ENCODE measurements at regions of chr17 and their contacts with region 1.

Region 1: DNA sequence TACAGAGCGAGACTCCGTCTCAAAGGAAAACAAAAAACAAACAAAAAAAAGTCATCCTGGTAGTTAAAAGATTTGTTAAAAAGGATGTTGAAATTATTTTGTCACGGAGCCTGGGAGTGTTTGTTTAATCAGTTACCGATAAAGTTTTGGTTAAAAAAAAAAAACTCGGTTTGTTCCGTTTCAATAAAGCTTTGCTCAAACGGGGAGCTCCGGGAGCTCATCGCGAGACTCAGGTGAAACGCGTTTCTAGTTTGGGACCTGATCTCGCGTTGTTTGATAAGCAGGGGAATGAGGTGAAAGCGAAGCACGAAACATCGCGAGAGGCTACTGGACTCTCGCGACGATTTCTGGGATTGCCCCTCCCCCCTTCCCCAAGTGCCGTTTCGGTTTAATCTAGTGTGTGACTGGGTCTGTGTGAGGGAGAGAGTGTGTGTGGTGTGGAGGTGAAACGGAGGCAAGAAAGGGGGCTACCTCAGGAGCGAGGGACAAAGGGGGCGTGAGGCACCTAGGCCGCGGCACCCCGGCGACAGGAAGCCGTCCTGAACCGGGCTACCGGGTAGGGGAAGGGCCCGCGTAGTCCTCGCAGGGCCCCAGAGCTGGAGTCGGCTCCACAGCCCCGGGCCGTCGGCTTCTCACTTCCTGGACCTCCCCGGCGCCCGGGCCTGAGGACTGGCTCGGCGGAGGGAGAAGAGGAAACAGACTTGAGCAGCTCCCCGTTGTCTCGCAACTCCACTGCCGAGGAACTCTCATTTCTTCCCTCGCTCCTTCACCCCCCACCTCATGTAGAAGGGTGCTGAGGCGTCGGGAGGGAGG is at the start of gene CDK12:
- DNase-seq: peak; percentile 93
- ATAC-seq: peak; percentile 92
- H3K4me3 Mint-ChIP-seq: peak within 1 kb of the TSS; percentile 93
- H3K27ac Mint-ChIP-seq: peak within 1 kb of the TSS; percentile 99
- H3K4me1 Mint-ChIP-seq: peaks cover 26% of the 10 kb centered on the region
- H3K27me3 Mint-ChIP-seq: no peaks in the 10 kb centered on the region; the same call in 1 of the 2 replicates
- CTCF ChIP-seq: no peak
- total RNA-seq, gene CDK12: 58.4 to 61.6 TPM (median 59.5 TPM) in 3 replicates

Region 2: GRCh38 chr17:39450847-39451581 is 10.3 kb before region 1 on chr17 and contains the start of gene MED1:
- CTCF ChIA-PET with region 1: interaction called, 16 read pairs
- POLR2A ChIA-PET with region 1: interaction called, 23 read pairs
- DNase-seq: peak; percentile 94
- ATAC-seq: peak; percentile 98
- H3K4me3 Mint-ChIP-seq: peak within 1 kb of the TSS; percentile 99
- H3K27ac Mint-ChIP-seq: peak within 1 kb of the TSS; percentile 98
- H3K4me1 Mint-ChIP-seq: peaks cover 7% of the 10 kb centered on the region
- H3K27me3 Mint-ChIP-seq: no peaks in the 10 kb centered on the region; the same call in 1 of the 2 replicates
- CTCF ChIP-seq: no peak
- total RNA-seq, gene MED1: 47.0 to 50.4 TPM (median 47.9 TPM) in 3 replicates